ENCODE measurements at regions of chr5 and their contacts with region 1.

Region 1: DNA sequence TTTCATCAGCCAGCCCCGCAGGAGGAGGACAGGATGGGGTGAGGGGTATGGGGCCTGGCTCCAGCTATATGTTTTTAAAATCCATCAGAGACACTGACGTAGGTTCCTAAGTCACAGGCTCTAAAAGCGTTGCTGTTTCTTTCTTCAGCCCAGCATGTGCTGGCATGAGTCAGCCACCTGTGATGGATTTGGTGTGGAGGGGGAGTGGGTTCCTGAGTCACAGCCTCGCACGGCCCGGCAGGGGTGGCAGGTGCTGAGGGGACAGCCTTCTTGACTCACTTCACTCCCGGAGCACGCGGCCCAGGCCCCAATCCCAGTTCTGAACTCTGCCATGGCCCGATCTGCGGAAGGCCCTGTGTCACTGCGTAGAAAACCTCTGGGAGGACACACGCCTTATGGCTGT is 38.8 kb upstream of the RPL26L1 start:
- DNase-seq: no peak

Region 2: DNA sequence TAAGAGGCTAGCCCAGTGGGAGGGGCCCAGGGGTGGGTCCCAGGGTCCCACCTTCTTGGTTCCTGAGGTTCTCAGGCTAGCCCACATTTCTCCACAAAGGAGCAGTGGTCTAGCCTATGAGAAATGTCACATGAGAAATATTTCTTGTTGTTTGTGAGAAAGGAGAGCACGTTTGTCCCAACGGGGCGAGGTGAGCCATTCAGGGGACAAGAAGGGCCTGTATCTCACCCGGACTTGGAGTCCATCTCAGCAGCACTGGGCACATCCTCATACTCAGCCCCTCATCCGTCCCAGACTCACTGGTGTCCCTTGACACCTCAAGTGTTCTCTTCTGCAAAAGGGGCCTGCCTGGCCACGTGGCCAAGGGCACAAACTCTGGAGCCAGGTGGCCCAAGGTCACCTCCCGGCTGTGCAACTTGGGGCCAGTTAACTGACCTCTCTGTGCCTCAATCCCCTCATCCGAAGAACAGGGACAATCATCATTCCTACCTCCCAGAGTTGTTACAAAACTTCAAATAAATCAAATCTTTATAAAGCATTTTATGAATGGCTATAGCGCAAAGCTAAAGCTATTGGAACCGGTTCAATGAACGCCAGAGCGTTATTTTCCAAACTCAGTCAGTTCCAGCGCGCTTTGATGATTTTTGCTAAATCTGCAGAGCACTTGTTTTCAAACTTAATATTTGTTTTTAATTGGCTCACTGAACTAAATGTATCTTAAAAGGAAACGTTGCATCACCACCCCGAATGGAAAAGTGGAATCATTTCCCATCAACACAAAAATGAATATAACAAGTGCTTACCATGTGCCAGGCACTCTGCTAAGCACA is 198.9 kb before region 1 on chr5:
- in situ Hi-C with region 1: loop called (anchors 10 kb)
- DNase-seq: no peak

Measured in KBM-7 (cell line).